PC-9 (cell line): ENCODE measurements at regions of chr19 and their contacts with region 1.

Region 1: GRCh38 chr19:13952154-13953035 is at the start of gene DCAF15:
- DNase-seq: peak; percentile 99
- H3K4me3 ChIP-seq: peak within 1 kb of the TSS; percentile 82
- H3K27ac ChIP-seq: no peak within 1 kb of the TSS
- H3K4me1 ChIP-seq: peaks cover 6% of the 10 kb centered on the region
- H3K27me3 ChIP-seq: no peaks in the 10 kb centered on the region
- CTCF ChIP-seq: no peak
- total RNA-seq, gene DCAF15: 31.7 and 35.3 TPM in 2 replicates

Region 2: DNA sequence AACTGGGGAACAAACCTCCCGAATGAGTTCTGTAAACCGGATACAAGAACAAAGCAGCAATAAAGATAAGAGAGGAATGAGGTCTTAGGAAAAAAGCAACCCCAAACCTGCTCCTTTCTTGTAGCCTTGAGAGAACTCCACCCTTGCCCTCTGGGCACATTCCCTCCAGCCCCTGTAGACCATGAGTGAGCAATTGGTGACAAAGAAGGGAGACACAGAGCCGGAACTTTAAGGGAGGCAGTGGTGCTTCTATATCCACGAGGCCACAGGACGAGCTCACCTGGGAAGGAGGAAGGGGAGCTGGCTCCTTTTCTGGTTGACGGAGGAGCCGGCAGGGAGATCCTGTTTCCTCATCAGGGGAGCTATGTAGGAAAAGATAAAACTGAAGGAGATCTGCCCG is 59.5 kb before region 1 on chr19:
- CTCF ChIA-PET with region 1: no interaction called
- POLR2A ChIA-PET with region 1: no interaction called
- intact Hi-C with region 1: loop called (anchors 2 kb)
- DNase-seq: peak; percentile 77 to 99
- H3K4me3 ChIP-seq: no peak overlapping the region
- H3K27ac ChIP-seq: peak overlapping the region; percentile 75
- H3K4me1 ChIP-seq: peaks cover 34% of the 10 kb centered on the region
- H3K27me3 ChIP-seq: no peaks in the 10 kb centered on the region
- CTCF ChIP-seq: no peak

Region 3: DNA sequence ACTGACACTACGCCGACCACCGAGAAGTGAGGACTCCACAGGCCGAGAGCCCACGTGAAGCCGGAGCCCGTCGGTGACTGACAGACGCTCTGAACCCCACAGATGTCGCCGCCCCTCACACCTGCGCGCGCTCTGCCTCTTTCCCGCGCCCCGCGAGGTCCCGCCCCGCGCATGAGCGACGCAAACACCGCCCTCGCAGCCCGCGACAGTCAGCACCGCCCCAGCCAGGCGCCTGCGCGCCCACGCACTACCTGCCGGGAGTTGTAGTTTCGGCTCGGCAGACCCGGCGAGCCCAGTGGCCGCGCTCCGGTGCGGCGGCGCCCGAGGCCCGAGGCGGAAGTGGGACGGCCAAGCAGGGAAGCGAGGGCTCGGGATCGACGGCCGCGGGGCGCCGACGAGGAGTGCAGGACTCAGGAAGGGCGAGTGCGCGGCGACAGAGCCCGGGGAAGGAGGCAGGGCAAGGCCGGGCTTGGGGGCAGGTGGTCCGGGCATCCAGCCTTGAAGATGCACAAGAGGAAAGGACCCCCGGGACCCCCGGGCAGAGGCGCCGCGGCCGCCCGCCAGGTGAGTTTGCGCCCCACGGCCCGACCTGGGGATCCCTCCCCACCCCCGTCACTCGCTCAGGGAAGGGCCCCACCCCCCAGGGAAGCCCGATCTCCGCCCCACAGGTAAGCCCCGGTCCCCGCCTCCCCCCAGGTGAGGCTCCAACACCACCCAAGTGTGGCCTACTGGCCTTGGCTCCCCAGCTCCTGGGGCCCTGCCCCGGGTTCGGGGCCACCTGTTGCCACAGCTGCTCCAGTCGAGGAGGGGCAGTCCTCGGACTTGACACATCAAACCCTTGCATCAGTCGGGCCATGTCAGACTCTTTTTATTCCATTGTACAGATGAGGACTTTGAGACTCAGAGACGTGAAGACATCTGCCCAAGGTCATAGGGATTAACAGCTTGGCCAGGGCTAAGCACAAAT is 46.2 kb before region 1 on chr19 and contains the starts of genes BRME1 and CC2D1A:
- CTCF ChIA-PET with region 1: no interaction called
- POLR2A ChIA-PET with region 1: no interaction called
- intact Hi-C with region 1: no loop called
- DNase-seq: peak; percentile 80 to 95
- H3K4me3 ChIP-seq: peak within 1 kb of the TSS; percentile 69
- H3K27ac ChIP-seq: peak within 1 kb of the TSS; percentile 53
- H3K4me1 ChIP-seq: peaks cover 11% of the 10 kb centered on the region; the same call in 1 of the 2 replicates
- H3K27me3 ChIP-seq: no peaks in the 10 kb centered on the region
- CTCF ChIP-seq: no peak
- total RNA-seq, gene BRME1: 13.7 and 13.9 TPM in 2 replicates
- total RNA-seq, gene CC2D1A: 55.1 and 55.8 TPM in 2 replicates

Region 4: DNA sequence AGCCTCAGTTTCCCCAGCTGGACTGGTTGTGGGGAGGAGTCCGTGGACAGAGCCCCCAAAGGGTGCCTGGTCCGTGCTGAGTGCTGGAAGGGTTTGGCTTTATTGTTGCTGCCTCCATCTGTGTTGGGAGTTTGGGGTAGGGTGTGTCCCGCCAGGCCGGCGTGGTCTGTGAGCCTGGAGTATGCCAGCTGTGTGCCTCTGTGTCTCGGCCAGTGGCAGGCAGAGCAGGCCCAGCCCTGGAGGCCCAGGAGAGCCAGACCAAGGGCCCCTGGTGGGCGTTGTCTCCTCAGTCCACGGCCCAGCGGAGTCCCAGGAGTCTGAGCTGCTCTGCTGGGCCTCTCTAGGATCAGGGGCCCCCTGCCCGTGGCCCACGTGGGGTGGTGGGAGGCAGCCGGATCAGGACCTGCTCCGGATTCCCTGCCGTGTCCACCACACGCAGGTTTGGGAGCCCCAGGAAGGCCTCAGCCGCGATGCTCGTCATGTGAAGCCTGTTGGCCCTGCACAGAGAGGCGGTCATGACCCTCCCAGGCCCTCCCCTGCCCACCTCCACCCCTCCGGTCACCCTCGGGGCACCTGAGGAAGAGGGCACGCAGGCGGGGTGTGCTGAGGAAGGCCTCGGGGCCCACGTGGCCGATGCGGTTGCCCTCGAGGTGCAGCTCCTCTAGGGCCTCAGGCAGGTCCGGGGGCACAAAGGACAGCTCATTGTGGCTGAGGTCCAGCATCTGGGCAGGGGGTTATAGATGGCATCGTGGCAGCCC is 20.8 kb before region 1 on chr19:
- CTCF ChIA-PET with region 1: no interaction called
- POLR2A ChIA-PET with region 1: no interaction called
- intact Hi-C with region 1: no loop called
- DNase-seq: no peak
- H3K4me3 ChIP-seq: no peak overlapping the region
- H3K27ac ChIP-seq: no peak overlapping the region
- H3K4me1 ChIP-seq: no peaks in the 10 kb centered on the region
- H3K27me3 ChIP-seq: no peaks in the 10 kb centered on the region
- CTCF ChIP-seq: no peak